CD8-positive, alpha-beta T cell (primary cell): ENCODE measurements at regions of chr12 and their contacts with region 1.

Region 1: GRCh38 chr12:30847259-30847658 is 79.3 kb upstream of the TSPAN11 start:
- DNase-seq: peak in 2 of 9 experiments; percentile 65 to 71
- ATAC-seq: no peak
- H3K4me3 ChIP-seq: no peak overlapping the region
- H3K4me3 Mint-ChIP-seq: no peak overlapping the region
- H3K27ac ChIP-seq: no peak overlapping the region
- H3K27ac Mint-ChIP-seq: no peak overlapping the region
- H3K4me1 ChIP-seq: no peaks in the 10 kb centered on the region
- H3K4me1 Mint-ChIP-seq: peaks cover 10% of the 10 kb centered on the region
- H3K27me3 ChIP-seq: no peaks in the 10 kb centered on the region
- H3K27me3 Mint-ChIP-seq: no peaks in the 10 kb centered on the region
- CTCF ChIP-seq: peak; percentile 56

Region 2: GRCh38 chr12:29519585-29520182 is 1327.6 kb before region 1 on chr12:
- CTCF ChIA-PET with region 1: interaction called, 4 read pairs
- POLR2A ChIA-PET with region 1: no interaction called
- intact Hi-C with region 1: loop called (anchors 1 kb)
- DNase-seq: peak in 5 of 9 experiments; percentile 1 to 54 (median 16)
- ATAC-seq: no peak
- H3K4me3 ChIP-seq: no peak overlapping the region
- H3K4me3 Mint-ChIP-seq: no peak overlapping the region
- H3K27ac ChIP-seq: no peak overlapping the region
- H3K27ac Mint-ChIP-seq: no peak overlapping the region
- H3K4me1 ChIP-seq: no peaks in the 10 kb centered on the region
- H3K4me1 Mint-ChIP-seq: no peaks in the 10 kb centered on the region
- H3K27me3 ChIP-seq: no peaks in the 10 kb centered on the region
- H3K27me3 Mint-ChIP-seq: peaks cover 7% of the 10 kb centered on the region
- CTCF ChIP-seq: peak; percentile 61

Region 3: DNA sequence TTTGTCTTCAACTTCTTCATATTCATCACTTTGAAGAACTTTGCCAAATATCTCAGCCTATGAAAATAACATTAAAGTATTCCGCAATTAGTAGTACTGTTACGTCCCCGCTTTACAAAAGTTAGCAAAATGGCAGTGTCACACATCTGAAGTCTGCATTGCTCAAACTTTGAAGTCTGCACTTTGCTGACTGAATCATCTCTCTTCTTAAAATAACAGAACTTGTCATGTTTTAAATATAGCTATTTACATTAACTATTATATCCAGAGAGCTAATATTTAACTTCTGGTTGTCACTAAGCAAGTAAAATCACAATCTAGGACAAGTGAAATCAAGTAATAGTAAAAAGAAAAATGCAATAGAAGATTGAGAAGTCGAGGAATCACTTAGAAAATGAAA is 186.0 kb before region 1 on chr12:
- CTCF ChIA-PET with region 1: no interaction called
- POLR2A ChIA-PET with region 1: no interaction called
- intact Hi-C with region 1: no loop called
- DNase-seq: no peak
- ATAC-seq: no peak
- H3K4me3 ChIP-seq: no peak overlapping the region
- H3K4me3 Mint-ChIP-seq: no peak overlapping the region
- H3K27ac ChIP-seq: no peak overlapping the region
- H3K27ac Mint-ChIP-seq: no peak overlapping the region
- H3K4me1 ChIP-seq: no peaks in the 10 kb centered on the region
- H3K4me1 Mint-ChIP-seq: no peaks in the 10 kb centered on the region
- H3K27me3 ChIP-seq: no peaks in the 10 kb centered on the region
- H3K27me3 Mint-ChIP-seq: no peaks in the 10 kb centered on the region
- CTCF ChIP-seq: no peak

Region 4: GRCh38 chr12:30695199-30696103 is 151.8 kb before region 1 on chr12 and contains the start of gene IPO8:
- CTCF ChIA-PET with region 1: no interaction called
- POLR2A ChIA-PET with region 1: no interaction called
- intact Hi-C with region 1: loop called in 1 of 2 experiments (anchors 5 kb)
- DNase-seq: peak; percentile 65 to 93 (median 85)
- ATAC-seq: peak; percentile 93
- H3K4me3 ChIP-seq: peak within 1 kb of the TSS; percentile 63 to 96
- H3K4me3 Mint-ChIP-seq: peak within 1 kb of the TSS; percentile 98
- H3K27ac ChIP-seq: peak within 1 kb of the TSS; percentile 50 to 59
- H3K27ac Mint-ChIP-seq: peak within 1 kb of the TSS; percentile 93
- H3K4me1 ChIP-seq: peaks cover 35% of the 10 kb centered on the region
- H3K4me1 Mint-ChIP-seq: peaks cover 51% of the 10 kb centered on the region
- H3K27me3 ChIP-seq: no peaks in the 10 kb centered on the region
- H3K27me3 Mint-ChIP-seq: no peaks in the 10 kb centered on the region
- CTCF ChIP-seq: no peak
- total RNA-seq, gene IPO8: 21.0 to 22.7 TPM

Region 5: DNA sequence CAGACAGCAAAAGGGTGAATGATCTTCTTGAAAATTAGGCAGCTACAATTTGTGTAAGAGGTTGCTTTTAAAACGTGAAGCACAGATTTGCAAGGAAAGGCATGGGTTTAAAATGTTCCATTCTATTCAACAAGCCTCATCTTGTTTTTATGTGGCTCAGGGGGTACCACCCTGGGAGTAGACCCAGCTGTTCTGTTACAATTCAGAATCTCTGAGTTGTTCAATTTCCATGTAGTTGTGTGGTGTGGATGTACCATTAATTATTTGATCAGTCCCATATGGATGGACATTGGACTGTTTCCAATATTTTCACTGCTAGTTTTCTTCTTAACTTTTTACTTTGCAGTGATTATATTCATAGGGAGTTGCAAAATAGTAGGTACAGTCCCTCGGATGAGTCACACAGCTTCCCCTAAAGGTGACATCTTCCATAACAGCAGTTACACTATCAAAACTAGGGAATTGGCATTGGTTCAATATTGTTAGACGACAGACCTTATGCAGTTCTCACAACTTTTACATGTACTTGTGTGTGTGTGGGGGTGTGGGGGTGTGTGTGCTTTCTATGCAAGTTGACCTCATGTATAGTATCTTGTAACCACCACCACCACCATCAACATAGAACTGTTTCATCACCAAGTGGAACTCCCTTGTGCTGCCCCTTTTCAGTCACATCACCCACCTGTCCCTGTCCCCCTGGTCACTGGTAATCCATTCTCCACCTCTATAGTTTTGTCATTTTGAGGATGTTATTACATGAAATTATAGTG is 33.5 kb before region 1 on chr12:
- CTCF ChIA-PET with region 1: no interaction called
- POLR2A ChIA-PET with region 1: no interaction called
- intact Hi-C with region 1: loop called in 1 of 2 experiments (anchors 1 kb)
- DNase-seq: no peak
- ATAC-seq: no peak
- H3K4me3 ChIP-seq: no peak overlapping the region
- H3K4me3 Mint-ChIP-seq: no peak overlapping the region
- H3K27ac ChIP-seq: no peak overlapping the region
- H3K27ac Mint-ChIP-seq: no peak overlapping the region
- H3K4me1 ChIP-seq: no peaks in the 10 kb centered on the region
- H3K4me1 Mint-ChIP-seq: no peaks in the 10 kb centered on the region
- H3K27me3 ChIP-seq: no peaks in the 10 kb centered on the region
- H3K27me3 Mint-ChIP-seq: peaks cover 36% of the 10 kb centered on the region
- CTCF ChIP-seq: no peak

Region 6: DNA sequence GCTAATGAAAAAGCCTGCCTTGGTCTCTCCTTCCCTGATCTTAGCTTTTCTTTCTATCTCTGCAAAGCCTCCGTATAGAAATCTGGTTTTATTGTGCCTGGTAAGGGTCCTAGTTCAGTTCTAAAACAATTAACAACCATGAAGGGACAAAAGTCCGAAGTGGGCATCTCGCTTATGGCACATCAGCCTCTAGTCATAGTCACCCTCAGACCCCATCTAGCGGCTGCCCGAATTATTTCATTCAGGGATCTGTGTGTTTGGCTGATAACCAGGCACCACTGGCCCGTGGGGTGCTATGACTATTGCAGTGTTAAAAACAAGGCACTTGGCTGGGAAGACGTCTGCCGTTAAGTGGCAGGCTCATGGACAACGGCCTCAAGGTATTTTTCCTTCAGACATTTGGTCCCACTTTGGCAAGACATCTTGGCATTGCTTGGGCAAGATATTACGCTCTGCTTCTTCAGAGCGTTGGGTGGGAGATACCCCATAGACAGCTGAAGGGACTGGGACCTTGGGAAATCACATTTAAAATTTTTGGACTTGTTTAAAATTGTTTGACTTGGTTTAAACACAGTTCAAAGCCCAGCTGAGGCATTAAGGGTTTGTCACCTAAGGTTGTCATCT is 391.6 kb after region 1 on chr12:
- CTCF ChIA-PET with region 1: interaction called, 4 read pairs
- POLR2A ChIA-PET with region 1: no interaction called
- intact Hi-C with region 1: loop called (anchors 1 to 2 kb)
- DNase-seq: peak in 8 of 9 experiments; percentile 8 to 67 (median 50)
- ATAC-seq: peak; percentile 44
- H3K4me3 ChIP-seq: no peak overlapping the region
- H3K4me3 Mint-ChIP-seq: peak overlapping the region; percentile 26
- H3K27ac ChIP-seq: no peak overlapping the region
- H3K27ac Mint-ChIP-seq: no peak overlapping the region
- H3K4me1 ChIP-seq: no peaks in the 10 kb centered on the region
- H3K4me1 Mint-ChIP-seq: peaks cover 2% of the 10 kb centered on the region
- H3K27me3 ChIP-seq: peaks cover 0 to 3% of the 10 kb centered on the region in 2 experiments
- H3K27me3 Mint-ChIP-seq: peaks cover 25% of the 10 kb centered on the region
- CTCF ChIP-seq: peak; percentile 45

Region 7: GRCh38 chr12:31629756-31630732 is 782.8 kb after region 1 on chr12:
- CTCF ChIA-PET with region 1: no interaction called
- POLR2A ChIA-PET with region 1: no interaction called
- intact Hi-C with region 1: loop called in 1 of 2 experiments (anchors 5 kb)
- DNase-seq: no peak
- ATAC-seq: no peak
- H3K4me3 ChIP-seq: no peak overlapping the region
- H3K4me3 Mint-ChIP-seq: no peak overlapping the region
- H3K27ac ChIP-seq: no peak overlapping the region
- H3K27ac Mint-ChIP-seq: no peak overlapping the region
- H3K4me1 ChIP-seq: no peaks in the 10 kb centered on the region
- H3K4me1 Mint-ChIP-seq: no peaks in the 10 kb centered on the region
- H3K27me3 ChIP-seq: no peaks in the 10 kb centered on the region
- H3K27me3 Mint-ChIP-seq: peaks cover 2% of the 10 kb centered on the region
- CTCF ChIP-seq: no peak